ENCODE measurements at regions of chr19 and their contacts with region 1.

Region 1: GRCh38 chr19:33778089-33778791 is 18.4 kb upstream of the KCTD15 start:
- DNase-seq: peak; percentile 88
- ATAC-seq: peak; percentile 86 to 92

Region 2: GRCh38 chr19:33235269-33235995 is 542.8 kb before region 1 on chr19:
- intact Hi-C with region 1: loop called in 1 of 2 experiments (anchors 10 kb)
- DNase-seq: peak; percentile 81
- ATAC-seq: peak; percentile 66 to 75

Region 3: DNA sequence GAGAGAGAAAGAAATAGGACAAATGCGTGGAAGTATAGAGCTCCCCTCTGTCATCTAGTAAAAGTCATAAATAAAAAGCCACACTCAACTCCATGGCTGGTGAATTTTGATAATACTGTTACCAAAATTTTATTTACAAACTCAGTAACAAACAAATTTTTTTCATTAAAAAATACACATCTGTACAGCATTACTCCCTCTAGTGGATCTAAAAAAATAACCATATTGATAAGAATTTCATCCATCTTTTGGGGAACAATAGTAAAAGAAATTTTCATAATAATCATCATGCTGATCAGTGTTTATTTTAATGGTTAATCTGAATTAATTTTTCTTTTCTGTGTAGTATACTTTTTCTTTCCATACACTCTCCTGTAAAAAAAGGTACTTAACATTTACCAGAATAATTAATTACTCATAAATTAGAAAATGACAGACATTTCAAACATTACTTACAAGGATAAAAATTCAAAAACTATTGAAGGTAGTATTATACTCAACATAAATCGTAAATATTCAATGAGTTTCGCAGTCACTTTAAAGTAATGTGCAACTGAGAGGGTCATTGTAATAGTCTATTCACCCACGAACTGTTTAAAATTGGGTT is 220.6 kb after region 1 on chr19:
- intact Hi-C with region 1: loop called (anchors 2 to 5 kb)
- DNase-seq: no peak
- ATAC-seq: no peak

Region 4: GRCh38 chr19:34096020-34096915 is 318.0 kb after region 1 on chr19:
- intact Hi-C with region 1: loop called (anchors 1 to 5 kb)
- DNase-seq: no peak
- ATAC-seq: peak in 1 of 2 donors; percentile 51

Region 5: GRCh38 chr19:34145741-34146202 is 367.5 kb after region 1 on chr19:
- intact Hi-C with region 1: loop called (anchors 5 to 10 kb)
- DNase-seq: peak; percentile 33
- ATAC-seq: peak; percentile 50 to 56

Measured in left cardiac atrium (tissue), 4 donors.